Prostate gland (tissue), 2 donors: ENCODE measurements at regions of chr4 and their contacts with region 1.

Region 1: GRCh38 chr4:3346146-3346545 is 53.3 kb downstream of the RGS12 start:
- DNase-seq: peak; percentile 83
- H3K4me3 ChIP-seq: no peak overlapping the region
- H3K27ac ChIP-seq: no peak overlapping the region
- H3K4me1 ChIP-seq: no peaks in the 10 kb centered on the region
- H3K27me3 ChIP-seq: no peaks in the 10 kb centered on the region
- CTCF ChIP-seq: peak; percentile 60 to 92 (median 90)
- POLR2A ChIP-seq: no peak

Region 2: DNA sequence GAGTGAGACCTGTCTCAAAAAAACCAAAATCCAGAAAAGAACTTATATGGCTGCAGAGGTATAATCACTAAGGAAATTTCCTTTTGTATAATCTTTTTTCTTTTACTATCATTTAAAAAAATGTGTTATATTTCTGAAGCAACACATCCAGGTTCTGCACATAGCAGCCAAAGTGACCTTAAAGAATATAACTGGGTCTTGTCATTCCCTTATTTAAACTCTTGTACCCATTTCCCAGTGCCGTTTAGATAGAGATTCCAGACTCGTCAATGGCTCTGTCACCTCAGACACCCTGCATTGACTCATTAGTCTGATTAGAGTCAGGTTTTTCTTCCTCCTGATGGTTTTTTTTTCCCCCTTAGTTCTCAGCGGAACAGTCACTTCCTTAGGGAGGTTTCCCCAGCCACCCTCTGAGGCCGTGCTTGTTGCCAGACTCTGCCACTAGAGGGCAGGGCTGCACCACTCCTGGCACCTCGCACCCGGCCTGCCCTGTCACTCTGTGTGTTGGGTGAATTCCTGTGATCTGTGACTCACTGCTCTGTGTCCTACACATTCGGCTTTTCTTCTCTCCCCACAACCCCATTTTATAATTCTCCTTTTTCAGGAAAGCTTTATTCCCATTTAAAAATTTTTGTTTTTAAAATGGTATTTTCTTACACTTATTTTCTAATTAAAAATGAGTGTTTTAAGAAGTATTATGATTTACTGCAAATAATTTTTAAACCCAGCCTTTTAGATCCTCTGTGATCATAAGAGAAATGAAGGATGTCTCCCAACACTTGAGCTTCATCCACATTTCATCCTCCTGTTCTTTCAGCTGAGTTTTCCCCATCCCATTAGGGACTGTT is 239.6 kb before region 1 on chr4:
- intact Hi-C with region 1: loop called (anchors 5 kb)
- DNase-seq: peak; percentile 81
- H3K4me3 ChIP-seq: no peak overlapping the region
- H3K27ac ChIP-seq: no peak overlapping the region
- H3K4me1 ChIP-seq: no peaks in the 10 kb centered on the region
- H3K27me3 ChIP-seq: no peaks in the 10 kb centered on the region
- CTCF ChIP-seq: peak; percentile 67 to 96 (median 92)
- POLR2A ChIP-seq: no peak

Region 3: DNA sequence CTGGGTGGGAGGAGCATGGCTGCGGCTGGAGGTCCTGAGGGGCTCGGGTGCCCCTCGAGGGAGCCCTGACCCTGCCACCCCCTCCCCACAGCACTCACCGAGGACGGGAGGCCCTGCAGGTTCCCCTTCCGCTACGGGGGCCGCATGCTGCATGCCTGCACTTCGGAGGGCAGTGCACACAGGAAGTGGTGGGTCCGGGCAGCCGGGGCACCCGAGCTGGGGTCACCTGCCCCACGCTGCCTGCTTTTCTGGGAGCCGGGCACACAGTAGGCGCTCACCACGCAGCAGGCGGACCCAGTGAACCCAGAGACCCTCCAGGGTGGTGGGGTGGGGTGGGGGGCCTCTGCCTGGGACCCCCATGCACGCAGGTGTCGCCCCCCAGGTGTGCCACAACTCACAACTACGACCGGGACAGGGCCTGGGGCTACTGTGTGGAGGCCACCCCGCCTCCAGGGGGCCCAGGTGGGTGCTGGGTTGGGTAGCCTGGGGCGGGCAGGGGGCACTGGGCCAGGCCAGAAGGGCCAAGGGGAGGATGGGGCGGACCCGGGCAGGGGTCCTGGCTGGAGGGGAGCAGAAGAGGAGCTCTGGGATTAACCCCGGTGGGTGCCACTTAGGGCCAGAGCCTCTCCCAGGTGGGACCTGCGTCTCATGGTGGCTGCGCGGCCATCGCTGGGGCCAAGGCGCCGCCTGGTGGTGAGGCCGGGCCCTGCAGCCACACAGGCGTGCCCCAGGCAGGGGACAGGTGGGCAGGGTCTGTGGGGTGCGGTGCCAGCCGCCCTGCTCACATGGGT is 97.0 kb after region 1 on chr4:
- intact Hi-C with region 1: loop called (anchors 2 kb)
- DNase-seq: peak; percentile 33
- H3K4me3 ChIP-seq: no peak overlapping the region
- H3K27ac ChIP-seq: no peak overlapping the region
- H3K4me1 ChIP-seq: no peaks in the 10 kb centered on the region
- H3K27me3 ChIP-seq: no peaks in the 10 kb centered on the region
- CTCF ChIP-seq: peak; percentile 98 to 99 (median 99)
- POLR2A ChIP-seq: no peak

Region 4: GRCh38 chr4:3655963-3656362 is 309.8 kb after region 1 on chr4:
- intact Hi-C with region 1: no loop called
- DNase-seq: no peak
- H3K4me3 ChIP-seq: no peak overlapping the region
- H3K27ac ChIP-seq: peak overlapping the region in 1 of 2 donors; percentile 58
- H3K4me1 ChIP-seq: no peaks in the 10 kb centered on the region
- H3K27me3 ChIP-seq: peaks cover 11% of the 10 kb centered on the region
- CTCF ChIP-seq: no peak
- POLR2A ChIP-seq: no peak